ENCODE measurements at regions of chr10 and their contacts with region 1.

Region 1: GRCh38 chr10:17782921-17783665 is 26.1 kb upstream of the MRC1 start:
- DNase-seq: peak; percentile 53 to 82
- ATAC-seq: peak; percentile 92 to 96 (median 94)
- H3K4me3 ChIP-seq: peak overlapping the region; percentile 42
- H3K27ac ChIP-seq: peak overlapping the region; percentile 86
- H3K4me1 ChIP-seq: peaks cover 26% of the 10 kb centered on the region
- H3K27me3 ChIP-seq: no peaks in the 10 kb centered on the region
- CTCF ChIP-seq: no peak

Region 2: GRCh38 chr10:17747883-17748550 is 35.1 kb before region 1 on chr10:
- intact Hi-C with region 1: loop called in 1 of 2 experiments (anchors 5 kb)
- DNase-seq: no peak
- ATAC-seq: peak in 3 of 4 donors; percentile 49 to 68 (median 67)
- H3K4me3 ChIP-seq: no peak overlapping the region
- H3K27ac ChIP-seq: no peak overlapping the region
- H3K4me1 ChIP-seq: peaks cover 14% of the 10 kb centered on the region
- H3K27me3 ChIP-seq: no peaks in the 10 kb centered on the region
- CTCF ChIP-seq: no peak

Measured in psoas muscle (tissue), 8 donors.